ENCODE measurements at regions of chr1 and their contacts with region 1.

Region 1: DNA sequence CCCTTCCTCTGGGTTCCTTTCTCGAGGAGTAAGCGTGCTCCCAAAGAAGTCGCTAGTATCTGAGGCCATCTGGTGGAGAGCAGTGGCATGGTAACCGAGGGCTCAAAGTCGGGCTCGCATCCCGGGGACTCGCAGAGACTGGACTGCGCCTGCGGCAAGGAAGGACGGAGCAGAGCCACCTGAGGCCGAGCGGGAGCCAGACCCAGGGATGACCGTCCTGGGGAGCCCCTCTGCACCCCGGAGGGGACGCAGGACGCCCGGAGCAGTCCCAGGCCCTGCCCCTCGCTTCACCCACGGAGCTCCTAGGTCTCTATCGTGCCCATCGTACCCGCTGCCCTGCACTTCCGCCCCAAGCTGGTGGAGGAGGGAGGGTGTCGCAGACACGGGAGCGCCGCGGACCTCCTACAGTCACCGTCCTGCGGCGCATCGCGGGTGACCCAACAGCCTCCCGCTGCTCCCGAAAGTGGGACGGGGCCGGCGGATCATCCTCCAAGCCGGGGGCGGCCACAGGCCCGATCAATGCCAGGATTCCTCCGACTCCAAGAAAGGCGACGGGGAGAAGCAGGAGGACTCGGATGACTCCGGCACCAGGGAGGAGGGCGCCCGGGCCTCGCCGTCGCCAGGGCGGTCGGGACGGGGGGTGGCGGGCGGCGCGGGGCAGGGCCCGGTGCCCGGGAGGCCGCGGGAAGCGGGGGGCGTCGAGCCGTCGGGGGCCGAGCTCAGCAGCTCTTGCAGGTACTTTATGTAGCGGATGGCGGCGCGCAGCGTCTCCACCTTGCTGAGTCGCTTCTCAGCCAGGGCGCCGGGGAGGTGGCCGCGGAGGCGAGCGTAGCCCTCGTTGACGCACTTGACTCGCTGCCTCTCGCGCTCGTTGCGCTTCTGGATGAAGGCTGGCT is 2.3 kb upstream of the CACNA1S start:
- H3K4me3 Mint-ChIP-seq: peak overlapping the region; percentile 82
- H3K27ac Mint-ChIP-seq: peak overlapping the region; percentile 31
- H3K4me1 Mint-ChIP-seq: peaks cover 5% of the 10 kb centered on the region
- H3K27me3 Mint-ChIP-seq: peaks cover 60% of the 10 kb centered on the region

Region 2: DNA sequence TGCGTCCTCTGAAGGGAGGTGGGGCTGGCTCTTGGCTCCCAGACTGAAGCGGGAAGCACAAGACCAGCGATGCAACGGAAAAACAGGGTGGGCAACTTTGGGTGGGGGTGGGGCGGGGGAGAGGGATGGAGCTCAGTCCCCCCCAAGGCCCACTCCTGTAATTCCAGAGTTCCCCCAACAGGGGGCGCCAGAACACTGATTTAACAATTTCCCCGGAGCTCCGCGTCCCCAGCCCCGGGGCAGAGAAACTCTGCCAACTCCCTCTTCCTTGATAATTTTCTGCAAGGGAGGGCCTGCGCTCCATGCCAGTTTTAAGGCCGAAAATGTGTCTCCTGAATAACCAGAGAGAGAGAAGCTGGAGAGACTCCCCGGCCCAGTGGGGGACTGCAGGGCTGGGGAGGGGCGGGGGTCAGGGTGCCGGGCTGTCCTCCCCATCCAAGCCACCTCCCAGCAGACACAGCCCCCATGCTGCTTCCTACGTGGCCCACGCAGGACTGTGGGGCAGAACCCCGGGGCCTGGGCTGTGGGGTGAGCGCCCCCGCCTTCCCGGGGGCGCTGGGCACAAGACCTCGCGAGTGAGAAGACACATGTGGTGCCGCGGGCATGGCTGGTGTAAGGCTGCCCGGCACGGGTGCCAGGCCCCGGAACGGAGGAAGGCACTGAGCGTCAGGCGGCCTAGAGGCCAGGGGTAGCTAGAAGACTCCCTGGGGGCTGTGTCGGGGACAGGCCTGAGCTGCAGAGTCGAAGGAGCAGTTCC is 142.4 kb before region 1 on chr1:
- intact Hi-C with region 1: loop called (anchors 1 kb)
- H3K4me3 Mint-ChIP-seq: no peak overlapping the region
- H3K27ac Mint-ChIP-seq: no peak overlapping the region
- H3K4me1 Mint-ChIP-seq: no peaks in the 10 kb centered on the region
- H3K27me3 Mint-ChIP-seq: no peaks in the 10 kb centered on the region

Region 3: DNA sequence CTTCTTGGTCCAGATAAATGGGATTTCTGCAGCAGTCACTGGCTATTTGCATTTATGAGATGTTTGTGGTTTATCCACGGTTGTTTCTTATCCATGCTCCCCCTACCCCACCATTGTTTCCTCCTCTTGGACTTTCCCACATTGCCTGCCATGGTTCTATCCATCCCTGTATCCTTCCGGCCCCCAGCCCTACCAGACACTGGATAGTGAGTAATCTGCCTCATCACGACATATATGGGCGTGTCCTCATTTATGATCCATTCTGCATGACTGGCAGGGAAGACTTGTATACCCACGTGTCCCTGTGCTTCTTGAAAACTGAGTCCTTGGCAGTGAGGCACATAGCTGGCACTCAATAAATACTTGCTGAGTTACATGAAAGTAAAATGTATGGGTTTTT is 42.3 kb before region 1 on chr1:
- intact Hi-C with region 1: no loop called
- H3K4me3 Mint-ChIP-seq: no peak overlapping the region
- H3K27ac Mint-ChIP-seq: no peak overlapping the region
- H3K4me1 Mint-ChIP-seq: no peaks in the 10 kb centered on the region
- H3K27me3 Mint-ChIP-seq: no peaks in the 10 kb centered on the region

Region 4: DNA sequence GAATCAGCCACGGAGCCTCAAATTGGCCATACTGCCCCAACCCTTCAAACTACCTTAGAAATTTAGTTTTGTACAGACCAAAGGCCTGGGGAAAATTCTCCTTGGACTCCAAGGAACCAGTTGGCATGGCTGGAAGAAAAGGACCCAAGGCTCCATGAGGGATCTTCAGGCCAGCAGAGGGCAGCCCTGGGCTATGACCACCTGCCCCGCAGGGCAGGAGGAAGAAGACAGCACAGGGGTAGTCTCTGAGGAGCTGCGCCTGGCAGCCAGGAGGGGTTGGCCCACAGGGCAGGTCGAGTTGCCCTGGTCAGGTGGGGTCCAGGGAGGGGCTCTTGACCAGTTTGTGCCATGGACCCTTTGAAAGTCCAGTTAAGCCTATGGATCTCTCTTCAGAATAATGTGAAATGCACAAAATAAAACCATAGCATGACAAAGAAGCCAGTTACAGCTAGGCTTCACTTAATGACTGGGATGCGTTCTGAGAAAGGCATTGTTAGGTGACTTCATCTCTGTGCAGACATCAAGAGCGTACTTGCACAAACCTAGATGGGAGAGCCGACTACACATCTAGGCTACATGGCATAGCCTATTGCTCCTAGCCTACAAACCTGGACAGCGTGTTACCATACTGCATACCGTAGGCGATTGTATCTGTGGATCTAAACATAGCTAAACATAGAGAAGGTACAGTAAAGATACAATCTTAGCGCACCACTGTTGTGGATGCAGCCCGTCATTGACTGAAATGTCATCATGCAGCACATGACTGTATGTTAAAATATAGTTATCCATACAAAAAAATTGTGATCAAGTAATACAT is 28.4 kb before region 1 on chr1:
- intact Hi-C with region 1: loop called (anchors 1 kb)
- H3K4me3 Mint-ChIP-seq: no peak overlapping the region
- H3K27ac Mint-ChIP-seq: no peak overlapping the region
- H3K4me1 Mint-ChIP-seq: peaks cover 5% of the 10 kb centered on the region
- H3K27me3 Mint-ChIP-seq: peaks cover 17% of the 10 kb centered on the region

Region 5: GRCh38 chr1:201254625-201255506 is 140.4 kb after region 1 on chr1:
- intact Hi-C with region 1: no loop called
- H3K4me3 Mint-ChIP-seq: no peak overlapping the region
- H3K27ac Mint-ChIP-seq: no peak overlapping the region
- H3K4me1 Mint-ChIP-seq: no peaks in the 10 kb centered on the region
- H3K27me3 Mint-ChIP-seq: peaks cover 4% of the 10 kb centered on the region